ENCODE measurements at regions of chr5 and their contacts with region 1.

Region 1: DNA sequence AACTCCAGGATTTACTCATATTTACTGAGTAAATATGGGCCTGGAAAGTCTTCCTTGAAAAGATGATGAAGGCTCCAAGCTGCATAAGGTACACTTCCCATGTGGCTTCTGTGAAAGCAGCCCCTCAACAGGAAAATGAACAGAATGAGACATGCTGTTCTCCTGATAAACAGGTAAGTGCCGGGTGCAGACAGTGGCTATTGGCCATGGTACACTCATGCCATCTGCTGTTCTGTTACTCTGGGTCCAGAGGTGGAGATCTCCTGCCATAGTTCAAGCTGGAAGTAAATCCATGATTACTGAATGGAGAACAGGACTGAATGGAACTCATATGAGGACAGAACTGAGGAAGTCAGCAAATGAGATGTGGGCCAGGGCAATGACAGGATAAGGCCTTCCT is 103.6 kb downstream of the SLIT3 start:
- DNase-seq: peak in 3 of 6 donors; percentile 27 to 49 (median 33)
- ATAC-seq: peak; percentile 66 to 89 (median 79)
- H3K4me3 ChIP-seq: no peak overlapping the region
- H3K27ac ChIP-seq: no peak overlapping the region
- H3K4me1 ChIP-seq: no peaks in the 10 kb centered on the region
- H3K27me3 ChIP-seq: no peaks in the 10 kb centered on the region
- CTCF ChIP-seq: peak in 1 of 4 donors; percentile 5

Region 2: GRCh38 chr5:168987543-168988300 is 209.6 kb before region 1 on chr5:
- intact Hi-C with region 1: loop called in 2 of 3 experiments (anchors 10 kb)
- DNase-seq: peak; percentile 31 to 89 (median 70)
- ATAC-seq: peak; percentile 56 to 95 (median 86)
- H3K4me3 ChIP-seq: no peak overlapping the region
- H3K27ac ChIP-seq: no peak overlapping the region
- H3K4me1 ChIP-seq: no peaks in the 10 kb centered on the region
- H3K27me3 ChIP-seq: peaks cover 0 to 12% (median 0%) of the 10 kb centered on the region in 4 donors
- CTCF ChIP-seq: peak; percentile 75 to 90 (median 82)

Region 3: DNA sequence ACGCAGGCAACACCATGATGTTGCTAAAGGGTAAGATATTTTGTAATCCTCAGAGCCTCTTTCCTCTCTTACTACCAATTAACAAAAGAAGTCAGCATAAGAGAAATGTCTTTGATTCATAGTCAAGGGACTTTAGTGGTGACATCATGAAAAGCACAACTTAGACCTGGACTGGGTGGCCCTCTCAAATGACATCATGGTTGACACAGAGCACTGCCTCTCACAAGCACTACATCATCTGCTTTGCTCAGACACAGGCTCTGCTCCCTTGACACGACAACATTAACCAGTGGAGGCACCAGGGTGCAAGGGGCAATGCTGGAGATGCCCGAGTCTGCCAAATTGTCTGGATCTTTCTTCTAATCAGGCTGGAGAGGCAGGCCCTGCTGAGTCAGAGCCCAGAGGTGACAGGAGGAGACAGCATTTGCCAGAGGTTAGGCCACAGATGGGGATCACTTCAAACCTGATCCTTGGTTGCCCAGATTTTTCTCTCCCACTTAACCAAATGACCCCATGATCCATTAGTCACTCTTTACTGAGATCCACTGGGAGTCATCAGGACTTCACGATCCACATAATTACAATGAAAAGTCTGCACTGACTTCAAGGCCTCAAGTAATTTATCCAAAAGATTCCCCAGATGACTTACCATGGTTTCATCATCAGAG is 70.8 kb before region 1 on chr5:
- intact Hi-C with region 1: no loop called
- DNase-seq: no peak
- ATAC-seq: peak in 2 of 4 donors; percentile 40 to 54
- H3K4me3 ChIP-seq: no peak overlapping the region
- H3K27ac ChIP-seq: no peak overlapping the region
- H3K4me1 ChIP-seq: no peaks in the 10 kb centered on the region
- H3K27me3 ChIP-seq: no peaks in the 10 kb centered on the region
- CTCF ChIP-seq: no peak